ENCODE measurements at regions of chr6 and their contacts with region 1.

Region 1: DNA sequence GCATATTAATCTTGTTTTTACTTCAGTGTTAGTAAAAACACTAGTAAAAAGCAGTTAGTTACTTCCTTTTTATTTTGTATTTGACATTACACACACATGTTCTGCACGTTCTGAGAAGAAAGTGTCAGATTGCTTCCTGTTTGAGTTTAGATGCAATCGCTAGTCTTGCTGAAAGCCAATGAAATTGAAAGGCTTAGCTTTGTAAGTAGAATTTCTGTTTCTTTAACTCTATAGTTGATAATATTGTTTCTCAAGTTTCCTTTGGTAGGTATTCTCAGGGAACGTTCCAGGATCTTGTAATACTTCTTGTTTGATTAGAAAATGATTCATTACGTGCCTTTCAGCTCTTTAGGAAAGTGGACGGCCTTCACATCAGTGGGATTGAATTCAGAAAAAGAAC is 55.0 kb downstream of the CDKAL1 start:
- DNase-seq: no peak
- H3K4me3 Mint-ChIP-seq: no peak overlapping the region
- H3K27ac Mint-ChIP-seq: no peak overlapping the region
- H3K4me1 Mint-ChIP-seq: peaks cover 15% of the 10 kb centered on the region
- H3K27me3 Mint-ChIP-seq: no peaks in the 10 kb centered on the region

Region 2: DNA sequence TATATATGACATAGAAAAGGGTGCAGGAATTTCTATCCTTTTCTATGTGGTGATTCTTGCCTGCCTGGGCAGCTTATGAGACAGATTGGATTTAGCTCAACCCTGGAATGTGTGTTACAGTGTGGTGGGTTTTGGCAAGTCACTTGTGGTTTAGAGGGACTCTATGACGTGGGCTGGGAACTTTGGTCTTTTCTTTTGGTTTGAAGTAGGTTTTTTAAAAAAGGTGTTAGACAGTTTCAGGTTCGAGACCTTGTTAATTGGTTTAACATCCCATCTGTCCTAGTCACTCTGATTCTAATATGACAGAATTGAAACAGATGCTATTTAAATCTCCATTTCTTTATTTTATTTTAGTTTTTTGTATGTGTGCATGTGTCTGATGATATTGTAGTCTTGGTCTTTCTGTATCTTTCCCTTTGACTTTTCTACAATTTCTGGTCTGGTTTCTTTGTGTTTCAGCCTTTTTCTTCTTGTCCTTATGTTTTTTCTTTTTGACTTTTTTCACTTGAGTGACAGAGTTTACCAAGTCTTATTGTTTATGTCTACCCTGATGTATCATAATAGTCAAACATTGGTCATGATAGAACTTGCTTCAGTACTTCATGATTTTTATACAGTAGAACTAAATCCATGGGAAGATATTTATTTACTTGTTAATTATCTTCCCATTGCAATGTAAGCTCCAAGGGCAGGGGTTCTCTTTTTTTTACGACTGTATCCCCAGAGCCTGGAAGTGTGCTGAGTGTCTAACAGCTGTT is 119.3 kb after region 1 on chr6:
- intact Hi-C with region 1: loop called (anchors 10 kb)
- DNase-seq: no peak
- H3K4me3 Mint-ChIP-seq: no peak overlapping the region
- H3K27ac Mint-ChIP-seq: no peak overlapping the region
- H3K4me1 Mint-ChIP-seq: peaks cover 25% of the 10 kb centered on the region
- H3K27me3 Mint-ChIP-seq: no peaks in the 10 kb centered on the region

Region 3: DNA sequence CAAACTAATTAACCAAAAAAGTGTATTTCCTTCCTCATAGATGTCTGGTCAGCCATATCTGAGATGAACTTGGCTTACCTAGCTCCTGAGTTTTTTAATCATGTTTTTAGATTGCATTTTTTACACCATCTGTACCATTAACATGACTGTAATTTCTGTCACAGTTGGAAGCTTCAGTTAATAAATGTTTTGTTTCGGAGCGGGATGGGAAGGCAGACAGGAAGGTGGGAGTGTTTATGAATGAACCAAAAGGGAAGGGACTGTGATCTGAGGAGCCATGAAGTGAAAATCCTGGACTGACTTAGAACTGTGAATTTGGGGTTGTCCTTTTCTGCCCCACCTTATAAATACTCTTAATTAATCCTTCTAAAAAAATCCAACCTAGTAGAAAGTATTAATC is 558.7 kb after region 1 on chr6:
- intact Hi-C with region 1: no loop called
- DNase-seq: no peak
- H3K4me3 Mint-ChIP-seq: no peak overlapping the region
- H3K27ac Mint-ChIP-seq: no peak overlapping the region
- H3K4me1 Mint-ChIP-seq: no peaks in the 10 kb centered on the region
- H3K27me3 Mint-ChIP-seq: no peaks in the 10 kb centered on the region

Region 4: DNA sequence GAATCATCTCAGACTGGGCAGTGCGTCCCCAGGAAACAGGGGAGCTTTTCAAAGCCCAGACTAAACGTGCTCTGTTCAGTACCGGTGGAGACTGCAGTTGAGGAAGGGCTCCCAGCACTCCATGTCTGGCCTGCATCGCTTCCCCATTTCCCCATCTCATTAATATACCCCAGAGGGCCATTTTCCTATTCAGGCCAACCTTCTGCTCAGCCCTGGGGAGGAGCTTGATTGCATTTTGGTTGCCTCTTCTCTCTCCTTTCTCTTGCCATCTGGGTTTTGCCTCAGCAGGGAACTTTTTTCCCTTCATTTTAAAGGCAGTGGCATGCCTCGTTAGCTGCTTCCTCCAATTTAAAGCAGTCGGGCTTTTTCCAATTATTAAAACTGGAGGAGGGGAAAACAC is 610.0 kb after region 1 on chr6:
- intact Hi-C with region 1: loop called (anchors 10 kb)
- DNase-seq: no peak
- H3K4me3 Mint-ChIP-seq: no peak overlapping the region
- H3K27ac Mint-ChIP-seq: no peak overlapping the region
- H3K4me1 Mint-ChIP-seq: peaks cover 6% of the 10 kb centered on the region
- H3K27me3 Mint-ChIP-seq: no peaks in the 10 kb centered on the region

Measured in activated CD4-positive, alpha-beta T cell treated with anti-CD3 and anti-CD28 coated beads, Interleukin-2, amount 10 ng/mL, durations not matched to agents 24 days and 14 days (primary cell).